Activated T-helper 2 cell treated with anti-CD3 and anti-CD28 coated beads, Interferon-gamma antibody, Interleukin-2, Interleukin-4, amounts not matched to agents 10 μg/mL and 5 μg/mL and 100 μg/mL, durations not matched to agents 14 hours and 24 hours and 36 hours (primary cell): ENCODE measurements at regions of chr12 and their contacts with region 1.

Region 1: GRCh38 chr12:101857043-101857558 is 20.3 kb upstream of the DRAM1 start:
- DNase-seq: no peak
- H3K4me3 Mint-ChIP-seq: no peak overlapping the region
- H3K27ac Mint-ChIP-seq: no peak overlapping the region
- H3K4me1 Mint-ChIP-seq: peaks cover 38% of the 10 kb centered on the region
- H3K27me3 Mint-ChIP-seq: no peaks in the 10 kb centered on the region

Region 2: DNA sequence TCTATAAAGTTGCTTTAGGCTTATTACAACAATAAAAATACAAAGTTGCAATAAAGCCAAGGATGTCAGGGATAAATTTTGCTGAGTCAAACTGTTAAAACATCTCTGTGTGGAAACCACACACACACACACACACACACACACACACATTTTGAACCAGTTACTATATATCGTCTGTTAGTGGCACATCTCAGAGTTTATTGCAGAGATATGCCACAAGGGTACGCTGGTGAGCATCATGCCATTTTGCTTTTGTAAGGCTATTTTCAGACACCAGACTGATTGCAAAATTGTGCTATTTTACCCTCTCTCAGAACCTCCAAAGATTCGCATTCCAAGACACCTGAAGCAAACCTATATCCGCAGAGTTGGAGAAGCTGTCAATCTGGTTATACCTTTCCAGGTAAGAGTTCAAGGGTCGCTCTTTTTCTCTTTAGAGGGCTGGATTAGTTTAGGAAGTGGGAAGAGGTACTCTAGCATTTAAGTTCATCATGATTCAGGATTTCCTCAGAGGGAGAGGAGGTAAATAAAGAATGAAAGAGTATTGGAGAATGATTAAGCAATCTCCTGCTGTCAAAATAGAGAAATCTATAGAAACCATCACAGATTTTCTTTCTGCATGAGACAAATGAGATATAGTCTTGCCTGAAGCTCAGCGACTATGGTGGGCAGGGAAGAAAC is 187.0 kb before region 1 on chr12:
- intact Hi-C with region 1: loop called (anchors 5 kb)
- DNase-seq: peak; percentile 24
- H3K4me3 Mint-ChIP-seq: no peak overlapping the region
- H3K27ac Mint-ChIP-seq: no peak overlapping the region
- H3K4me1 Mint-ChIP-seq: peaks cover 16% of the 10 kb centered on the region
- H3K27me3 Mint-ChIP-seq: peaks cover 8% of the 10 kb centered on the region

Region 3: GRCh38 chr12:101792051-101792931 is 64.8 kb before region 1 on chr12:
- intact Hi-C with region 1: loop called (anchors 2 kb)
- DNase-seq: no peak
- H3K4me3 Mint-ChIP-seq: no peak overlapping the region
- H3K27ac Mint-ChIP-seq: peak overlapping the region; percentile 79
- H3K4me1 Mint-ChIP-seq: peaks cover 50% of the 10 kb centered on the region
- H3K27me3 Mint-ChIP-seq: no peaks in the 10 kb centered on the region